Thyroid gland (tissue), 4 donors: ENCODE measurements at regions of chr15 and their contacts with region 1.

Region 1: GRCh38 chr15:92077353-92078085 is 224.0 kb downstream of the SLCO3A1 start:
- DNase-seq: peak; percentile 74 to 77
- H3K4me3 ChIP-seq: no peak overlapping the region
- H3K27ac ChIP-seq: no peak overlapping the region
- H3K4me1 ChIP-seq: peaks cover 8 to 26% of the 10 kb centered on the region in 2 donors
- H3K27me3 ChIP-seq: no peaks in the 10 kb centered on the region
- CTCF ChIP-seq: peak; percentile 27 to 77 (median 66)
- POLR2A ChIP-seq: no peak

Region 2: GRCh38 chr15:91302588-91303439 is 774.7 kb before region 1 on chr15:
- intact Hi-C with region 1: loop called (anchors 10 kb)
- DNase-seq: peak; percentile 21 to 39
- H3K4me3 ChIP-seq: no peak overlapping the region
- H3K27ac ChIP-seq: no peak overlapping the region
- H3K4me1 ChIP-seq: no peaks in the 10 kb centered on the region
- H3K27me3 ChIP-seq: no peaks in the 10 kb centered on the region
- CTCF ChIP-seq: peak; percentile 28 to 77 (median 67)
- POLR2A ChIP-seq: no peak

Region 3: DNA sequence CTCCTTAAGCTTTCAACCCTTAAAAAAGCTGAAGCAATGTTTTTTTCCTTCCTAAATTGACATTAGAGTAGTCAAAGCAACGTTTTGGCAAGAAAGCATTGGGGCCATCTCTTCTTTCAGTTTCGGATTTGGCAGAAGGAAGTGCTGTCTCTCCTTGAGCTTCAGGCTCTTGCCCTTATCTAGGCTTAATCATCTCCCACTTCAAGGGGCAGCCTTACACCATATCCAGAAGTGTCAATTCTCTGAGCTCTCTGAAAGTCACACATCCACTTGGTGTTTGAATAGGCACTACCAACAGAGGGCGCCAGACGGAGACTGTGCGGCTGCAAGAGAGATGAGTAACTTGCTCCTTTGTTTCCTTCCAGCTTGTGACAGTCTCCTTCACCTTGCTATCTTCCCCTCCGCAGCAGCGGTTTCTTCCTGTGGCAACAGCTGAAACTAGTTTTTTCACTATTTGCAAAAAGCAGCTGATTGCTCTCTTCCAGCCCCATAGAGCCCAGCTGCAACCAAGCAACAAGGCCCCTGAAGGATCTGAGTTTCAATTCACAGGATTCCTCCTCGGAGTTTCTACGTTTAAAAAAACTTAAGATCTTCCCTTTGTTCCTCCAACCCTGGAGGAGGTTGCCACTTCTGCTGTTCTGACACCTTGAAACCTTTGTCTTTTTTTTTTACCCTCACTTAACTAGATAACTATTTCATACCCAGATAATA is 371.0 kb before region 1 on chr15:
- intact Hi-C with region 1: loop called (anchors 5 kb)
- DNase-seq: peak; percentile 77 to 86
- H3K4me3 ChIP-seq: no peak overlapping the region
- H3K27ac ChIP-seq: no peak overlapping the region
- H3K4me1 ChIP-seq: no peaks in the 10 kb centered on the region
- H3K27me3 ChIP-seq: no peaks in the 10 kb centered on the region
- CTCF ChIP-seq: peak; percentile 86 to 94 (median 89)
- POLR2A ChIP-seq: no peak

Region 4: GRCh38 chr15:91852741-91853510 is 224.6 kb before region 1 on chr15:
- intact Hi-C with region 1: loop called (anchors 5 kb)
- DNase-seq: peak; percentile 75
- H3K4me3 ChIP-seq: peak overlapping the region; percentile 41 to 82 (median 54)
- H3K27ac ChIP-seq: peak overlapping the region; percentile 88 to 93 (median 92)
- H3K4me1 ChIP-seq: peaks cover 42 to 47% of the 10 kb centered on the region in 2 donors
- H3K27me3 ChIP-seq: no peaks in the 10 kb centered on the region
- CTCF ChIP-seq: peak; percentile 19 to 84 (median 77)
- POLR2A ChIP-seq: no peak

Region 5: DNA sequence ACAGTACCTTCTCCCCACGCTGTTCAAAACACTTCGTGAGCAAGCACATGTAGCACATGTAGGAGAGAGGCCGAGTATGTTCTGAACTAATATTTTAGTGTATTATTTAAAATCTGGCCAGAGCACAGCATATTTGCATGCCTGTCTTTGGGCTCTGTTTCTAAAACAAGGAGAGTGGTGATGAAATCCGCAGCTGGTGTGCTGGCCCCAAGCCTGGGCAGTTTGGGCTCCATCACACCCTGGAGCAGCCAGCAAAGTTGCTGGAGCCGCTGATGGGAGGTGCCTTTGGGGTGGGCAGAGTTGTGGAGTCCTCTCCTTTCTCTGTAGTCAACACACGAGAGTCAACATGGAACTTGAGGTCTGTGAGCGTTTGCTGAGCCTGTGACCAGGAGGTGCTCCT is 107.4 kb before region 1 on chr15:
- intact Hi-C with region 1: loop called (anchors 10 kb)
- DNase-seq: no peak
- H3K4me3 ChIP-seq: no peak overlapping the region
- H3K27ac ChIP-seq: no peak overlapping the region
- H3K4me1 ChIP-seq: peaks cover 9 to 36% of the 10 kb centered on the region in 2 donors
- H3K27me3 ChIP-seq: no peaks in the 10 kb centered on the region
- CTCF ChIP-seq: no peak
- POLR2A ChIP-seq: no peak

Region 6: GRCh38 chr15:92020765-92021164 is 56.8 kb before region 1 on chr15:
- intact Hi-C with region 1: no loop called
- DNase-seq: no peak
- H3K4me3 ChIP-seq: no peak overlapping the region
- H3K27ac ChIP-seq: no peak overlapping the region
- H3K4me1 ChIP-seq: peaks cover 10 to 27% of the 10 kb centered on the region in 2 donors
- H3K27me3 ChIP-seq: no peaks in the 10 kb centered on the region
- CTCF ChIP-seq: no peak
- POLR2A ChIP-seq: no peak

Region 7: GRCh38 chr15:92217896-92218295 is 140.4 kb after region 1 on chr15:
- intact Hi-C with region 1: no loop called
- DNase-seq: no peak
- H3K4me3 ChIP-seq: no peak overlapping the region
- H3K27ac ChIP-seq: no peak overlapping the region
- H3K4me1 ChIP-seq: no peaks in the 10 kb centered on the region
- H3K27me3 ChIP-seq: no peaks in the 10 kb centered on the region
- CTCF ChIP-seq: no peak
- POLR2A ChIP-seq: no peak